B cell (primary cell): ENCODE measurements at regions of chr16 and their contacts with region 1.

Region 1: DNA sequence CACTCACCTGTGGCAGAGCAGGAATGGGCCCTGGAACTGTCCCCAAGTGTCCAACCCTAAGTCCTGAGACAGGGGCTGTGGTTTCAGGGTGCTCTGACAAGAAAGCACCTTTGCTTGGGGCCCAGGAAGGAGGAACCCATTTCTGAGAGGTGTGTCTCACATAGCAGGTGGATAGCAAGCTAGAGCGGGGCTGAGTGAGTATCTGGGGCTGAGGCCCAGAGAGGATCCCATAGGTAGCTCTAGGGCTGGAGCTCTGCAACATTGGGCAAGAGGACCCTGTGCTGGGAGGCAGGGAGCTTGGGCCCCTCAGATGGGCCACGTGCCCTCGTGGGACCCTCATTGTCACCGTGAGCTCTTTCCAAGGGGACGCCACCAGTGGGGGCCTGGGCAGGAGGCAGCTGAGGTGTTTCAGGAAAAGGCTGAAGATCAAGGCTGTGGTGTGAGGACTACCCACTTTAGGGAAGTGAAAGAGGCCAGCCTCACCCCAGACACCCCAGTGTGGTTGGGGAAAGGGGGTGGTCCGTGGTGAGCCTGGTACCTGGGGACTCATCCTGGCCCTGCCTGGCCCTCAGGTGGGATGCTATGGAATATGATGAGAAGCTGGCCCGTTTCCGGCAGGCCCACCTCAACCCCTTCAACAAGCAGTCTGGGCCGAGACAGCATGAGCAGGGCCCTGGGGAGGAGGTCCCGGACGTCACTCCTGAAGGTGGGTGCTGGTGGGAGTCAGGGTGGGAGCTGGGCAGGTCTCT is 5.3 kb downstream of the DEF8 start:
- DNase-seq: peak; percentile 81
- ATAC-seq: peak; percentile 73
- H3K4me3 ChIP-seq: peak overlapping the region in 3 of 5 experiments; percentile 27 to 52 (median 27)
- H3K4me3 Mint-ChIP-seq: peak overlapping the region; percentile 80
- H3K27ac ChIP-seq: peak overlapping the region; percentile 26 to 63
- H3K27ac Mint-ChIP-seq: peak overlapping the region; percentile 81
- H3K4me1 ChIP-seq: peaks cover 86 to 92% of the 10 kb centered on the region in 2 donors
- H3K4me1 Mint-ChIP-seq: peaks cover 74% of the 10 kb centered on the region
- H3K27me3 ChIP-seq: peaks cover 0 to 2% (median 0%) of the 10 kb centered on the region in 4 experiments
- H3K27me3 Mint-ChIP-seq: no peaks in the 10 kb centered on the region
- CTCF ChIP-seq: no peak

Region 2: GRCh38 chr16:89775223-89775622 is 178.6 kb before region 1 on chr16:
- CTCF ChIA-PET with region 1: no interaction called
- POLR2A ChIA-PET with region 1: no interaction called
- intact Hi-C with region 1: no loop called
- DNase-seq: no peak
- ATAC-seq: no peak
- H3K4me3 ChIP-seq: no peak overlapping the region
- H3K4me3 Mint-ChIP-seq: no peak overlapping the region
- H3K27ac ChIP-seq: no peak overlapping the region
- H3K27ac Mint-ChIP-seq: no peak overlapping the region
- H3K4me1 ChIP-seq: no peaks in the 10 kb centered on the region
- H3K4me1 Mint-ChIP-seq: no peaks in the 10 kb centered on the region
- H3K27me3 ChIP-seq: no peaks in the 10 kb centered on the region
- H3K27me3 Mint-ChIP-seq: no peaks in the 10 kb centered on the region
- CTCF ChIP-seq: no peak

Region 3: DNA sequence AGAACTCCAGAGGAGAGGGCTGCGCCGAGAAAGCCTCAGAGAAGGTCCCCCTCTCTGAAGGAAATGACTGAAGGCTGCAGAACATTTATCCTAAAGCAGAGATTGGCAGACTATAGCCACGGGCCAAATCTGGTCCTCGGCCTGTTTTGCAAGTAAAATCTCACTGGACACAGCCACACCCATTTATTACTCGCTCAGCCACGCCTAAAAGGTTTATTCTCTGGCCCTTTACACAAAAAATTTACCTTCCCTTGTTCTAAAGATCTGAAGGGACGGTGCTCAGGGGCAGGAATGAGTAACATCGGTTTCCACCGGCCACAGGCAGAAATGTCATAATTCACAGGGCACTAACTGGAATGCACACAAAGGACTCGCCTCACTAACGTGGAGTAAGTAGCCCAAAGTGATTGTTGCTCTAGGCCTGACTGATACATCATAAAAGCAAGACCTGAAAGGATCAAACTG is 89.5 kb before region 1 on chr16:
- CTCF ChIA-PET with region 1: no interaction called
- POLR2A ChIA-PET with region 1: no interaction called
- intact Hi-C with region 1: no loop called
- DNase-seq: no peak
- ATAC-seq: no peak
- H3K4me3 ChIP-seq: no peak overlapping the region
- H3K4me3 Mint-ChIP-seq: peak overlapping the region; percentile 1
- H3K27ac ChIP-seq: peak overlapping the region; percentile 31 to 48
- H3K27ac Mint-ChIP-seq: peak overlapping the region; percentile 59
- H3K4me1 ChIP-seq: peaks cover 17 to 29% of the 10 kb centered on the region in 2 donors
- H3K4me1 Mint-ChIP-seq: peaks cover 29% of the 10 kb centered on the region
- H3K27me3 ChIP-seq: peaks cover 0 to 4% (median 0%) of the 10 kb centered on the region in 4 experiments
- H3K27me3 Mint-ChIP-seq: no peaks in the 10 kb centered on the region
- CTCF ChIP-seq: no peak

Region 4: DNA sequence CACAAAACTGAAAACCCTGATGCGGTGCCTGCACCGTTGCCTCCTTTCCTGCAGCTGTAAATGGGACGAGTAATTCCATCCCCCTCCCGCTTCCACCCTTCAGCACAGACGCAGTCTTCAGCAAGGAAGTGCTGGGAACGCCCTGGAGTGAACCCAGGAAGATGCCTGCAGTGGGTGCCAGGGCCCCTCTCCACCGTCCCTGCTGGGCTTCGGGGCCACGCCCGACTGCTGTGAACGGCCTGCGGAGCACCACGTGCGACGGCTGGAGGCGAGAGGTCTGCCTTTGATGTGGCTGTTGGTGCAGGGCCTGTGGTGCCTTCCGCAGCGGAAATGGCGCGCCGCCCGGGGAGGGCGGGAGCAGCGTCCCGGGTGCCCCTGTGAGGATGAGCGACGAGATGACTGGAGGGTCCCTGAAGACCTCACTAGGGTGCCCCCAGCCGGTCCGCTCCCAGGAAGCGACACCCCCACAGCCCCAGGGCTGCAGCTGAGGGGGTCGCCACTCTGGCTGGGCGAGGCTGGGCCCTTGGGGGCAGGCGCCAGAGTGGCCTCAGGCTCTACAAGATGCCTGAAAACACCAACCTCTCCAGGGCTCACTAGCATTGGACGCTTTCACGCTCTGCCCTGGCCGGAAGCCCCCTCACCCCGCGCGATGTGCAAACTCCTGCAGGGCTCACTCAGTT is 35.9 kb before region 1 on chr16:
- CTCF ChIA-PET with region 1: interaction called, 3 read pairs
- POLR2A ChIA-PET with region 1: interaction called, 3 read pairs
- intact Hi-C with region 1: loop called (anchors 2 kb)
- DNase-seq: peak; percentile 77
- ATAC-seq: peak; percentile 80
- H3K4me3 ChIP-seq: peak overlapping the region; percentile 8 to 59 (median 46)
- H3K4me3 Mint-ChIP-seq: peak overlapping the region; percentile 81
- H3K27ac ChIP-seq: no peak overlapping the region
- H3K27ac Mint-ChIP-seq: peak overlapping the region; percentile 61
- H3K4me1 ChIP-seq: peaks cover 39 to 41% of the 10 kb centered on the region in 2 donors
- H3K4me1 Mint-ChIP-seq: peaks cover 36% of the 10 kb centered on the region
- H3K27me3 ChIP-seq: peaks cover 0 to 45% (median 20%) of the 10 kb centered on the region in 4 experiments
- H3K27me3 Mint-ChIP-seq: peaks cover 24% of the 10 kb centered on the region
- CTCF ChIP-seq: no peak

Region 5: DNA sequence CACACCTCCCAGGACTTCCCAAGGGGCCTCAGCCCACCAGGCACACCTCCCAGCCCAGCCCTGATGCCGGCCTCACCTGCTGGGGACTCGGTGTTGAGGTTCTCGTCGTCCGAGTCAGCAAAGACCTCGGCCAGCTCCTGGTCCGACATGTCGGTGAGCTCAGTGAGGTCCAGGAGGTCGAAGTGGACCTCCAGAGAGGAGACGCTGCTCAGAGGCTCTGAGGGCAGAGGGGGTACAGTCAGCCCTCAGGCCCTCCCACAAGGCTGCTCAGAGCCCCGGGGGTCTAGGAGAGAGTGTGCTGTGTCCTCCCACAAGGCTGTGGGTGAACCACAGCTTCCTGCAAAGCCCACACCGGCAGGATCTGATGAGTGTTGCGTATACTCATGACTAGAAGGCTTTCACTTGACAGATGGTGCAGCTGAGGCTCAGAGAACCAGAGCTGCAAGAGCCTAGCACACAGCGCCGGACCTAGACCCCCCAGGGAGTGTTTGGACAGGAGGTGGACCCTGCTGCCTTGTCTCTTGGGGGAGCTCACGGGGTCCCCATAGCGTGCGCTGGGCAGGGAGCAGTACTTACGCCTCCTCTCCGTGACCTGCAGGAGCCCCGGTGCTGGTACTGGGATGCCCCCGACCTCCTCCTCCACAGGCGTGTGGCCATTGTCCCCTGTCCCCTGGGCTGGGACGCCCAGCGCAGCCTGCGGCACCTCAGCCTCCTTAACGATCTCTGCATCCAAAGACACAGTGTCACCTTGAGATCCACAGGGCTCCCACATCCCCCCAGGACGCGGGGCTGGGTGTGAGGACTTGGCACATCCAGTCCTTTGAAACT is 55.1 kb after region 1 on chr16:
- CTCF ChIA-PET with region 1: no interaction called
- POLR2A ChIA-PET with region 1: interaction called, 4 read pairs
- intact Hi-C with region 1: loop called (anchors 5 kb)
- DNase-seq: peak; percentile 90
- ATAC-seq: peak; percentile 90
- H3K4me3 ChIP-seq: peak overlapping the region in 4 of 5 experiments; percentile 26 to 51 (median 38)
- H3K4me3 Mint-ChIP-seq: peak overlapping the region; percentile 80
- H3K27ac ChIP-seq: peak overlapping the region; percentile 70 to 76
- H3K27ac Mint-ChIP-seq: peak overlapping the region; percentile 92
- H3K4me1 ChIP-seq: peaks cover 54 to 68% of the 10 kb centered on the region in 2 donors
- H3K4me1 Mint-ChIP-seq: peaks cover 56% of the 10 kb centered on the region
- H3K27me3 ChIP-seq: no peaks in the 10 kb centered on the region
- H3K27me3 Mint-ChIP-seq: no peaks in the 10 kb centered on the region
- CTCF ChIP-seq: no peak

Region 6: DNA sequence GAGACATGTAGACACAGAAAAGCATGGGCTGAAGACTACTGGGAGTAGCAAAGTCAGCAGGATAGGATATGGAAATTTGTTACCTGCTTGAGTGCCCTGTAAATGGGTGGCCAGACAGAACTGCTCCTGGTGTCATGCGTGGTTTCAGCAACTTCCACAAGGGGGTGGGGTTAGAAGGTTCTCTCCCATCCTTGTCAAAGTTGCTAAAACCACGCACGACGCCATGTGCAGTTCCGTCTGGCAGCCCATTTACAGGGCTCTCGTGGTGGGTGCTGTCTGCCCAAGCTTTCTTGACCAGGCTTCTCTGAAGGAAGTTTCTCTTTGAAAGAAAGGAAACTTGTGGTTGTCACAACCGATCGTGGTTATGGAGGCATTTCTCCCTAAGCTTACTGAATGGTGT is 72.3 kb after region 1 on chr16:
- CTCF ChIA-PET with region 1: no interaction called
- POLR2A ChIA-PET with region 1: no interaction called
- intact Hi-C with region 1: no loop called
- DNase-seq: peak; percentile 40
- ATAC-seq: no peak
- H3K4me3 ChIP-seq: no peak overlapping the region
- H3K4me3 Mint-ChIP-seq: no peak overlapping the region
- H3K27ac ChIP-seq: no peak overlapping the region
- H3K27ac Mint-ChIP-seq: no peak overlapping the region
- H3K4me1 ChIP-seq: peaks cover 19 to 27% of the 10 kb centered on the region in 2 donors
- H3K4me1 Mint-ChIP-seq: peaks cover 17% of the 10 kb centered on the region
- H3K27me3 ChIP-seq: peaks cover 0 to 9% (median 3%) of the 10 kb centered on the region in 4 experiments
- H3K27me3 Mint-ChIP-seq: peaks cover 5% of the 10 kb centered on the region
- CTCF ChIP-seq: no peak